ENCODE measurements at regions of chr15 and their contacts with region 1.

Region 1: GRCh38 chr15:84818261-84819131 is 1.3 kb downstream of the ALPK3 start:
- DNase-seq: peak in 1 of 2 donors; percentile 81
- H3K4me3 ChIP-seq: peak overlapping the region; percentile 67 to 77
- H3K27ac ChIP-seq: peak overlapping the region; percentile 98 to 99
- H3K4me1 ChIP-seq: peaks cover 12 to 50% of the 10 kb centered on the region in 2 donors
- H3K27me3 ChIP-seq: no peaks in the 10 kb centered on the region
- CTCF ChIP-seq: no peak

Region 2: DNA sequence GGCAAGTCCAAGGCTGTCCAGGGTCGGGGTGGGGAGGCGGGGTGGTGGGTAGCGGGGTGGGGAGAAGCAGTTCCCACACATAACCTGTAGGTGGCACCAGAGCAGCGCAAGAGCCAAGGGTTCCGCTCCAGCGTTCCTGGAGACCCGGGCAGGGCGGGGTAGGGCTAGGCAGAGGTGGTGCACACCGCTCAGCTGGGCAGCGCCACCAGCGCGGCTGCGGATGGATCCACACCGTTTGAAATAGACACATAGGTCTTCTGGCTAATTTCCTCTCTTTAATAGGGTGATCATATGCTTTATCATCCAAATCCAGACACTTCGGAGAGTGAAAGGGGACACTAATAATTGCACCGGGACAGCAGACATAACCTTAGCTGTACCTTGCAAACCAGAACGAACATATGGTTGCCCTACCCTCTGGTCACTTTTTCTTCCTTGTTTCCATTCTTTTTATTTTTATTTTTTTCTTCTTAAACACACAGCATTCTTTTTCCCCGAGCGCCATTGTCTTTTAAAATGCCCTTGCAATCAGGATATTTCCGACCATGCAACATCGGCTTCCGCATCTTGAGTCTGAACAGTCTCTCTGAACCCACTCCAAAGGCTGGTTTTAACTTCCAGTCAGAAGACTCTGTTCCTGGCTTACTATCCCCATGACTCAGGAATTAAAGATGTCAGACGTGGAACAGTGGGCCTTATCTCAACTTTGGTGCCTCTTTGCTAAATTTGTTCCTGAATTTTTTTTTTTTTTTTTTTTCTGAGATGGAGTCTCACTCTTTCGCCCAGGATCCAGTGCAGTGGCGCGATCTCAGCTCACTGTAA is 230.2 kb before region 1 on chr15:
- intact Hi-C with region 1: loop called (anchors 1 kb)
- DNase-seq: peak; percentile 36 to 92
- H3K4me3 ChIP-seq: peak overlapping the region; percentile 45 to 56
- H3K27ac ChIP-seq: no peak overlapping the region
- H3K4me1 ChIP-seq: no peaks in the 10 kb centered on the region
- H3K27me3 ChIP-seq: no peaks in the 10 kb centered on the region
- CTCF ChIP-seq: peak; percentile 65 to 96 (median 96)

Region 3: GRCh38 chr15:84716036-84716799 is 102.3 kb before region 1 on chr15 and contains the start of gene SEC11A:
- intact Hi-C with region 1: loop called (anchors 1 kb)
- DNase-seq: peak; percentile 88 to 98
- H3K4me3 ChIP-seq: peak within 1 kb of the TSS; percentile 70 to 77
- H3K27ac ChIP-seq: peak within 1 kb of the TSS; percentile 88
- H3K4me1 ChIP-seq: peaks cover 3 to 10% of the 10 kb centered on the region in 2 donors
- H3K27me3 ChIP-seq: no peaks in the 10 kb centered on the region
- CTCF ChIP-seq: no peak
- total RNA-seq, gene SEC11A: 31.6 TPM

Region 4: GRCh38 chr15:84727429-84727828 is 91.1 kb before region 1 on chr15:
- intact Hi-C with region 1: no loop called
- DNase-seq: no peak
- H3K4me3 ChIP-seq: no peak overlapping the region
- H3K27ac ChIP-seq: no peak overlapping the region
- H3K4me1 ChIP-seq: no peaks in the 10 kb centered on the region
- H3K27me3 ChIP-seq: no peaks in the 10 kb centered on the region
- CTCF ChIP-seq: no peak

Region 5: DNA sequence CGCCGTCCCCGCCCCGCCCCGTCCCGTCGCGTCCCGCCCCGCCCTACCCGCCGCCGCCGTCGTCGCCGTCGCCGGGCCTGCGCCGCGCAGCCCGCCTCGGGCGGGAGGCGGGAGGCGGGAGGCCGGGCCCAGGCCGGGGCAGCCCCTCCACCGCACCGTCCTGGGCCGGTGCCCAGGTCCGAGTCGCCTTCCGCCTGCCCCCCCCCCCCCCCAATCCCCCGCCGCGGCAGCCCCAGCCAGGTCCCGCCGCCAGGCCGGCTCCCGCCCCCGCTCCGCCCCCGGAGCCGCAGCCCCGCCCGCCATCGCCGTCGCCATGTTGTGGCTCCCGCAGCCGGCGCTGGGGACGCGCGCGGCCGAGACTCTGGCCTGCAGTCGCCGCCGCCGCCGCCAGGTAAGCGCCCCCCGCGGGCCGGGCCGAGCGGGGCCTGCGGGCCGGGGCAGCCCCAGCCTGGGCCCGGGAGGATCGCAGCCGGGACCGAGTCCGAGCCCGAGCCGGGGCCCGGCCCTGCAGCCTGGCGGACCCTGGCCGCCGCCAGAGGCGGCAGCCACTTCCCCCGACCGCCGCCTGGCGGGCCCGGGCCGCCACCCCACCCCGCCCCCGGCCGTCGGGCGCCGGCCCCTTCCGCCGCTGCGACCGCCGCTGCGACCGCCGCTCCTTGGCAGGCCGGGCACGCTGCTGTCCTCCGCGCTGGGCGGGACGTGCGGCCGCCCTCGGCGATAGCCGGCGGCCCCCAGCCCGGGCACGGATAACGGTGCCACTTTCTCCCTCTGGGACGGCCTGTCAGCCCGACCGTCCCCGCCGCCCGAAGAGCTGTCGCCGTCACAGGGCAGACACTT is 70.0 kb before region 1 on chr15 and contains the start of gene ZNF592:
- intact Hi-C with region 1: loop called (anchors 2 kb)
- DNase-seq: peak; percentile 24 to 92
- H3K4me3 ChIP-seq: peak within 1 kb of the TSS; percentile 82 to 94
- H3K27ac ChIP-seq: peak within 1 kb of the TSS; percentile 99
- H3K4me1 ChIP-seq: peaks cover 7 to 42% of the 10 kb centered on the region in 2 donors
- H3K27me3 ChIP-seq: no peaks in the 10 kb centered on the region
- CTCF ChIP-seq: peak in 1 of 3 experiments; percentile 89
- total RNA-seq, gene ZNF592: 36.1 TPM

Region 6: GRCh38 chr15:84783496-84784251 is 34.8 kb before region 1 on chr15:
- intact Hi-C with region 1: no loop called
- DNase-seq: no peak
- H3K4me3 ChIP-seq: no peak overlapping the region
- H3K27ac ChIP-seq: no peak overlapping the region
- H3K4me1 ChIP-seq: peaks cover 4 to 26% of the 10 kb centered on the region in 2 donors
- H3K27me3 ChIP-seq: no peaks in the 10 kb centered on the region
- CTCF ChIP-seq: no peak

Region 7: DNA sequence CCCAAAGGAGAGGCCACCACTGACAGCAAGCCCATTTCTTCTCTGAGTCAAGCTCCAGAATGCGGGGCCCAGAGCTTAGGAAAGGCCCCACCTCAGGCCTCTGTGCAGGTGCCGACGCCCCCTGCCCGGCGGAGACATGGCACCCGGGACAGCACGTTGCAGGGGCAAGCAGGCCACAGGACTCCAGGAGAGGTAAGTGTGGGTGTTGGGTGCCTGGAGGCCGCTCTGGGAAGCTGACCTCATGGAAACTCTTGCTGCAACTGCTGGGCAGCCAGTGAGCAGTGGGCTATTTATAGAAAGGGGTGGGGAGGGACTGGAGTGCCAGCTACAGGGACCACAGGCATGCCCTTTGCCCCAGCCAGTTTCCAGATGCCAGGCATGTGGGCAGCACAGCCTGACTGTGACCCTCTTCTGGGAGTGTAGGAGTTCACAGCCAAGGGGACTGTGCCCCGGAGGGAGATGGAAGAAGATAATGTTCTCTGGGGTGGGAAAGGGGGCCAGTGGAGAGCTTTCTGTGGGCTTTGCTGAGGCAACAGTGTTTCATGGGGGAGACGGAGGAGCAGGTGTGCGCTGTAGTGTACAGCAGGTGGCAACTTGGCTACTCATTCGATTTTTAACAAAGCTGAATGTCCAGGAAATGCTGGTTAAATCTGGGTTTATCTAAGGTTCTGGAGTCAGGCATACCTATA is 22.4 kb after region 1 on chr15:
- intact Hi-C with region 1: loop called (anchors 1 kb)
- DNase-seq: peak; percentile 83 to 96
- H3K4me3 ChIP-seq: peak overlapping the region in 1 of 2 donors; percentile 9
- H3K27ac ChIP-seq: peak overlapping the region; percentile 97
- H3K4me1 ChIP-seq: peaks cover 16 to 46% of the 10 kb centered on the region in 2 donors
- H3K27me3 ChIP-seq: no peaks in the 10 kb centered on the region
- CTCF ChIP-seq: no peak

Region 8: DNA sequence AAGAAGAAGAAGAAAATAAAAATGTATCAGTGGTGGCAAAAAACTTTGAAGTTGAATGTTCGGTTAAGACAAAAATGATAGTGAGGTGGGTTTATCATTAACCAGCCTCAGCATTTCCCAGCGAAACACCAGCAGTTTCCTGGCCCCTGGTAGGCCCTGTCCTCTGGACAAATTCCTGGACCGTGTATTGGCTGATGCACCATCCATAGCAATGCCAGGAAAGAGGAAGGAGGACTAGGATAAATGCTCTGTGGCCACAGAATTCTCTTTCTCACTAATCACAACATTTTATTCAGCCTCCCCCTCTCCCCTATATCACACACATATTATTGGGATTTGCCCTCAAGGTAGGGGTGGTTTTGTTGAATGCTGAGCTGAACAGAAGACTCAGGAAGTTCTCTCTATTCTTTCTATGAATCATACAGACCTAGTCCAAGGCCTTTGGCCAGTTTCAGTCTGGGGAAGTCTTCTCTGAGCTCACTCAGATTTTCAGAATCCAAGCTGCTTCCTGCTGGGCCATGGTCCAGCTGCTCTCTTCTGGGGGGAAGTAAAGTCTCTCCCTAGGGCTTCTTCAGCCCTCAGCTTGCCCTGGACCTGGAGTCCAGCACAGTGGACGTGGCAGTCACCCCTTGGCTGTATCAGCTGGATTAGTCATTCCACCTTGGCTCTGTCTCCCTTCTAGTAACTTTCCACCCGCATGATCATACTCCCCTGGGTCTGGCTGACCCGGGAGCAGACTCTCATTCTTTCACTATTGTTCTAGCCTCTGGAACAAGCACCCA is 93.6 kb after region 1 on chr15:
- intact Hi-C with region 1: loop called (anchors 2 kb)
- DNase-seq: peak; percentile 89 to 98
- H3K4me3 ChIP-seq: no peak overlapping the region
- H3K27ac ChIP-seq: peak overlapping the region; percentile 83 to 98
- H3K4me1 ChIP-seq: peaks cover 32 to 56% of the 10 kb centered on the region in 2 donors
- H3K27me3 ChIP-seq: no peaks in the 10 kb centered on the region
- CTCF ChIP-seq: no peak

Region 9: GRCh38 chr15:84924074-84924731 is 105.7 kb after region 1 on chr15:
- intact Hi-C with region 1: loop called (anchors 2 kb)
- DNase-seq: no peak
- H3K4me3 ChIP-seq: no peak overlapping the region
- H3K27ac ChIP-seq: peak overlapping the region; percentile 46 to 69
- H3K4me1 ChIP-seq: peaks cover 3 to 21% of the 10 kb centered on the region in 2 donors
- H3K27me3 ChIP-seq: no peaks in the 10 kb centered on the region
- CTCF ChIP-seq: no peak

Measured in ascending aorta (tissue), 2 donors.